Calu3 (cell line): ENCODE measurements at regions of chr7 and their contacts with region 1.

Region 1: DNA sequence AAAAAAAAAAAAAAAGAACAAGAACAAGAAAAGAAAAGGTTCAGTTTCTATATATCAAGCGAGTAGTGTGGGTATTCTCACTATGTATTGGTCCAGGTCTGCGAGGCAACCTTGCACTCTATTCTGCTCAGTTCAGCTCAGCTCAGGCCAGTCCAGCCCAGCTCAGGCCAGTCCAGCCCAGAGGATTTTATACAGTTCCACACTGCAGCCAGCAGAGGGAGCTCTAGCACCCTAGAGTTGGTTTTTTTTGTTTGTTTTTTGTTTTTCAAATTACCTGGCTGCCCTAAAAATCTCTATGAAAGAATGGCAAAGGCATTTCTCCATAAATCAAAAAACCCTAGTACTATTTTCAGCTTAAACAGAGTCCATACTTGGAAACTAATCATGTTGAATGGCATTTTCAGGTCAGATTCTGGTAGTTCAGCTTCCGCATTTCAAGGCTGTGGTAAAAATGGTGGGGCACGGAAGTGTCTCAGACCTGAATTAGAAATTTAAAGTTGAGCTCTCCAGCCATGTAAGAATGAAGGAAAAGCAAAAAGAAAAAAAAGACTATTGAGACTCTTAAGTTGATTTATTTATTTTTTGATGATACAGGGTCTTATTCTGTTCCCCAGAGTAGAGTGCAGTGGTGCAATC is 55.2 kb upstream of the GSDME start:
- DNase-seq: peak; percentile 77
- H3K4me3 Mint-ChIP-seq: no peak overlapping the region
- H3K27ac Mint-ChIP-seq: no peak overlapping the region
- H3K4me1 Mint-ChIP-seq: peaks cover 4% of the 10 kb centered on the region
- H3K27me3 Mint-ChIP-seq: no peaks in the 10 kb centered on the region
- CTCF ChIP-seq: peak; percentile 92

Region 2: GRCh38 chr7:24213311-24213710 is 599.1 kb before region 1 on chr7:
- CTCF ChIA-PET with region 1: no interaction called
- intact Hi-C with region 1: no loop called
- DNase-seq: no peak
- H3K4me3 Mint-ChIP-seq: no peak overlapping the region
- H3K27ac Mint-ChIP-seq: no peak overlapping the region
- H3K4me1 Mint-ChIP-seq: no peaks in the 10 kb centered on the region
- H3K27me3 Mint-ChIP-seq: peaks cover 13% of the 10 kb centered on the region
- CTCF ChIP-seq: no peak

Region 3: DNA sequence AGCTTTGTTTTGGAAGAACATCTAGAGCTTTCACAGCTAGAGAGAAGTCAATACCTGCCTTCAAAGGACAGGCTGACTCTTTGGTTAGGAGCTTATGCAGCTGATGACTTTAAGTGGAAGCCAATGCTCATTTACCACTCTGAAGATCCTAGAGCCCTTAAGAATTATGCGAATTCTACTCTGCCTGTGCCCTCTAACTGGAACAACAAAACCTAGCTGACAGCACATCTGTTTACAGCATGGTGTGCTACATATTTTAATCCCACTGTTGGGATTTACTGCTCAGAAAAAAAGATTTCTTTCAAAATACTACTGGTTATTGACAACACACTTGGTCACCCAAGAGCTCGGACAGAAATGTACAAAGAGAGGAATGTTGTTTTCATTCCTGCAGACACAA is 181.8 kb before region 1 on chr7:
- CTCF ChIA-PET with region 1: no interaction called
- intact Hi-C with region 1: no loop called
- DNase-seq: no peak
- H3K4me3 Mint-ChIP-seq: no peak overlapping the region
- H3K27ac Mint-ChIP-seq: no peak overlapping the region
- H3K4me1 Mint-ChIP-seq: no peaks in the 10 kb centered on the region
- H3K27me3 Mint-ChIP-seq: no peaks in the 10 kb centered on the region
- CTCF ChIP-seq: no peak

Region 4: DNA sequence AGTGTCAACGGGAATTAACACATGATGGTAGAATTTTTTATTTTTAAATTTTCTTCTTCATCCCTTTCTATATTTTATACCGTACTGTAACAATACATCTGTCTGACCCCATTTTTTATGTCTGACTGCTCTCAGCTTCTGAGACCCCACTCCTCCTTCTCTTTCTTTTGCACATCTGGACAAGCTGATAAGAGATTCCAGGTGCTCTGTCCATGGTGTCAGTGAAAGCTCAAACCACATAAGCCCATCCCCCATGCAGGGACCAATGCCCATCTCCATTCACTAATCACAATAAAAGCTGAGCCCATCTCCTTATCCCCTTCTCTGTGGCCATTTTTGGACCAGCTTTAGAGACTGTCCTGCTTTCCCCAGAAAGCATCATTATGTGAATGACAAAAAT is 63.9 kb before region 1 on chr7:
- CTCF ChIA-PET with region 1: no interaction called
- intact Hi-C with region 1: no loop called
- DNase-seq: no peak
- H3K4me3 Mint-ChIP-seq: no peak overlapping the region
- H3K27ac Mint-ChIP-seq: no peak overlapping the region
- H3K4me1 Mint-ChIP-seq: peaks cover 9% of the 10 kb centered on the region
- H3K27me3 Mint-ChIP-seq: no peaks in the 10 kb centered on the region
- CTCF ChIP-seq: no peak

Region 5: DNA sequence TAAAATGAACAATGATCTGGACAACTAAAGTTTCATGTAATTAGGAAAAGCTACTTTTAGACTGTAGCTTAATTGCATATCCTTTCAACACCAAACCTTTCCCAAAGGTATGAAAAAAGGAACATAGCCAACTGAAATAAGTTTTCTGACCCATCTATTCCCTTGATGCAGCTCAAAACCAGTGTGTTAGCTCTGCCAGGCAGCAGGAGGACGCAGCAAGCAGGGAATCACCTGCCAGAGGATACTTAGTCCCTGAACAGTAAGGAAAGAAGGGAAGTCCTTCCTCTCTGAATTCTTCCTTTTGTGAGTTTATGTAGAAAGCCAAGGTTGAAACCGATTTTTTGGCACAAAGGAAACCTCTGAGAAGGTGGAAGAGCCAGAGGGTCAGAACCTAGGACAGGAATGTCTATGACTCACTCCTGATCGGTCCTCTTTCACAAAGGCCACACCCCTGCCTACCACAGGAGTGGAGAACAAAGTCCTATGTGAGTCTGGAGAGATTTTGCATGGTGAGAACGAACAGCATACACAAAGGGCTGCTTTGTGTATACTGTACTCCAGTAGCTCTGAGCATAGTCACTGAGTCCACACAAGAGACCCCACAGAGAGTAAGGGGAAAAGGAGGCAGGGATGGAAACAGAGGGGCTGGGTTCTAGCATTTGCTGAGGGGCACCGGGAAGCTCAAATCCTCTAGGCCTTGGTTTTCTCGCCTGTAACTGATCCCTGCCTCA is 13.7 kb after region 1 on chr7:
- CTCF ChIA-PET with region 1: interaction called, 14 read pairs
- intact Hi-C with region 1: no loop called
- DNase-seq: peak; percentile 94
- H3K4me3 Mint-ChIP-seq: peak overlapping the region; percentile 41
- H3K27ac Mint-ChIP-seq: peak overlapping the region; percentile 88
- H3K4me1 Mint-ChIP-seq: peaks cover 80% of the 10 kb centered on the region
- H3K27me3 Mint-ChIP-seq: no peaks in the 10 kb centered on the region
- CTCF ChIP-seq: no peak

Region 6: DNA sequence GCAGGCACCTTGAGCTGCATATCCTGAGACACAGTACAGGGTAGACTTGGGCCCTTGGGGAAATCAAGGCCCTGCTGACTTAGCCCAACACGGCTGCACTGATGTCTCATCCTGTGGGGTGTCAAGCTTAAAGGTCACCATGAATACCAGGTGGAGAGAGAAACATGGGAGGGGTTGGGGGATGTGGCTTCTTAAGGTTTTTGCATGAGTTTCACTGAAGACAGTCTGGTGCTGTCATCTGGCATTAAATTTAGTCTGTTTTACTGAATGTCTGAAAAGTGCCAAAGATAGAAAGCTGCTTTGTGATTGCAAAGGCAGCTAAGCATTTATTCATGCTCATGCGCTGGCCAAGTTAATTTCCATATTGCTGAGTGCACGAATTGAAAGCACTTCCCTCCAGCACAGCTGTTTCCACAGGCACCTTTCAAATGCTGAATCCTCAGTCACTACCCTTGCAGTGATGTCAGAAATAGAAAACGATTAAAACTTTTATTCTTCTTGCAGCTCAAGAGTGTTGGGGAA is 65.4 kb after region 1 on chr7:
- CTCF ChIA-PET with region 1: interaction called, 10 read pairs
- intact Hi-C with region 1: loop called (anchors 5 kb)
- DNase-seq: no peak
- H3K4me3 Mint-ChIP-seq: no peak overlapping the region
- H3K27ac Mint-ChIP-seq: no peak overlapping the region
- H3K4me1 Mint-ChIP-seq: no peaks in the 10 kb centered on the region
- H3K27me3 Mint-ChIP-seq: no peaks in the 10 kb centered on the region
- CTCF ChIP-seq: no peak

Region 7: GRCh38 chr7:24882989-24883621 is 70.7 kb after region 1 on chr7:
- CTCF ChIA-PET with region 1: interaction called, 10 read pairs
- intact Hi-C with region 1: loop called (anchors 5 kb)
- DNase-seq: no peak
- H3K4me3 Mint-ChIP-seq: no peak overlapping the region
- H3K27ac Mint-ChIP-seq: peak overlapping the region; percentile 3
- H3K4me1 Mint-ChIP-seq: no peaks in the 10 kb centered on the region
- H3K27me3 Mint-ChIP-seq: no peaks in the 10 kb centered on the region
- CTCF ChIP-seq: no peak

Region 8: GRCh38 chr7:24979863-24980533 is 167.6 kb after region 1 on chr7 and contains the start of gene OSBPL3:
- CTCF ChIA-PET with region 1: interaction called, 20 read pairs
- intact Hi-C with region 1: no loop called
- DNase-seq: peak; percentile 99
- H3K4me3 Mint-ChIP-seq: peak within 1 kb of the TSS; percentile 86
- H3K27ac Mint-ChIP-seq: peak within 1 kb of the TSS; percentile 92
- H3K4me1 Mint-ChIP-seq: peaks cover 48% of the 10 kb centered on the region
- H3K27me3 Mint-ChIP-seq: no peaks in the 10 kb centered on the region
- CTCF ChIP-seq: no peak
- total RNA-seq, gene OSBPL3: 124 and 136 TPM in 2 replicates

Region 9: GRCh38 chr7:25069900-25070443 is 257.5 kb after region 1 on chr7:
- CTCF ChIA-PET with region 1: interaction called, 13 read pairs
- intact Hi-C with region 1: loop called (anchors 2 kb)
- DNase-seq: peak; percentile 77
- H3K4me3 Mint-ChIP-seq: peak overlapping the region; percentile 21
- H3K27ac Mint-ChIP-seq: peak overlapping the region; percentile 35
- H3K4me1 Mint-ChIP-seq: peaks cover 39% of the 10 kb centered on the region
- H3K27me3 Mint-ChIP-seq: no peaks in the 10 kb centered on the region
- CTCF ChIP-seq: peak; percentile 74

Region 10: DNA sequence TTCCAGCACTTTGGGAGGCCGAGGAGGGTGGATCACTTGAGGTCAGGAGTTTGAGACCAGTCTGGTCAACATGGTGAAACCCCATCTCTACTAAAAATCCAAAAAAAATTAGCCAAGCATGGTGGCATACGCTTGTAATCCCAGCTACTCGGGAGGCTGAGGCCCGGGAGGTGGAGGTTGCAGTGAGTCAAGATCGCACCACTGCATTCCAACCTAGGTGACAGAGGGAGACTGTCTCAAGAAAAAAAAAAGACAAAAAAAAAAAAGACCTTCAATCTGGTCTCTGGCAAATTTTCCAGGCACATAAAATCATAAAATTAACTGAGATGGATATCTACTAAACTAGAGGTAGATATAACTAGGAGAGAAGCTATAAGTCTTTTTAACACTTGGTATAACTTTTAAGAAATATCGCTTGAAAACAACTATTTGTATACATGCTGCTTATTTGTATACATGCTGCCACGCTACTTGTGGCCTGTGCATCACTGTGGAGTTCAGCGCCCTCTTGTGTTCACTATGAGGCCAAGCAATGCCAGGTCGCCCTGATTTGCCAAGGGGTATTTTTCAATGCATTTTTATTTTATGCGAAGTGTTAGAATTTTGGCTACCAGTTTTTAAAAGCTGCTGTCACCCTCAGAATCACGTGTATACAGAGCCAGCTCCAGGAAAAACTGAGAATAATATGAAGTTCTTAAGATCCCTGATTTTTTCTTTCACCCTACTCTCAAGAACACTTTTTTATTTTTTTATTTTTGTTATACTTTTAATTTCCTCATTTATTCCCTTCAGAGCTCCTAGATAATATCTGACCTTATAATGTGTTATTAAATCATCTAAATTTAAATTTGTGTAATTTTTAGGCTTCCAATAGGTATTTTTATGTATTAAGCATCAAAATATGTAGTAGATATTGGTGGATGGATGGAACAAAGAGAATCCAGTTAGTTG is 285.9 kb after region 1 on chr7:
- CTCF ChIA-PET with region 1: interaction called, 60 read pairs
- intact Hi-C with region 1: loop called (anchors 1 kb)
- DNase-seq: peak; percentile 72
- H3K4me3 Mint-ChIP-seq: no peak overlapping the region
- H3K27ac Mint-ChIP-seq: no peak overlapping the region
- H3K4me1 Mint-ChIP-seq: peaks cover 32% of the 10 kb centered on the region
- H3K27me3 Mint-ChIP-seq: no peaks in the 10 kb centered on the region
- CTCF ChIP-seq: peak; percentile 91